Activated CD4-positive, alpha-beta memory T cell treated with anti-CD3 and anti-CD28 coated beads for 36 hours (primary cell): ENCODE measurements at regions of chr1 and their contacts with region 1.

Region 1: DNA sequence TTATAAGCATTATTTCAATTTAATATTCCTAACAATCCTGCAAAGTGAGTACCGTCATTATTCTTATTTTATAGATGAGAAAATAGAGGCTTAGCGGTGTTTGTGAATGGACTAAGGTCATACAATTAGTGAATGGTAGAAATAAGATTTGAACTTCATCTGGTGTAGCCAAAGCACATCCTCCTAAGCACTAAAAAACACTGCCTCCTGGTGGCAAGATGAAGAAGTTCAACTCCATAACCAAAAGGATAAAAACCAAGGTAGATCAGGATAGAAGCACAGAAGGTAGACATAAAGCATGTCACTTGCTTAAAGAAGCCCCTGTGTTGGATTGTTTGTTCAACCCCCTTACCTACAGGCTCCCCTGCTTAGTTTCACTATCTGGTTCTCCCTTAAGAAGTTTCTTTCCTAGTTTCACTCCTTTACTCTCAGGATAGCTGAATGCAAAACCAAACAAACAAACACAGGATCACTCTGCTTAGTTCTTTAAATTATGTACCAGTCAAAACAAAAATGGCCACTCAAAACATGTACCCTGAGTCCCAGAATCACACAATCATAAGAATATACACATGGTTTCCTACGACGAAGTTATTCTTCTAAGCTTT is 12.7 kb upstream of the AIM2 start:
- DNase-seq: no peak
- H3K4me3 Mint-ChIP-seq: peak overlapping the region; percentile 43
- H3K27ac Mint-ChIP-seq: peak overlapping the region; percentile 92
- H3K4me1 Mint-ChIP-seq: peaks cover 53% of the 10 kb centered on the region
- H3K27me3 Mint-ChIP-seq: no peaks in the 10 kb centered on the region

Region 2: DNA sequence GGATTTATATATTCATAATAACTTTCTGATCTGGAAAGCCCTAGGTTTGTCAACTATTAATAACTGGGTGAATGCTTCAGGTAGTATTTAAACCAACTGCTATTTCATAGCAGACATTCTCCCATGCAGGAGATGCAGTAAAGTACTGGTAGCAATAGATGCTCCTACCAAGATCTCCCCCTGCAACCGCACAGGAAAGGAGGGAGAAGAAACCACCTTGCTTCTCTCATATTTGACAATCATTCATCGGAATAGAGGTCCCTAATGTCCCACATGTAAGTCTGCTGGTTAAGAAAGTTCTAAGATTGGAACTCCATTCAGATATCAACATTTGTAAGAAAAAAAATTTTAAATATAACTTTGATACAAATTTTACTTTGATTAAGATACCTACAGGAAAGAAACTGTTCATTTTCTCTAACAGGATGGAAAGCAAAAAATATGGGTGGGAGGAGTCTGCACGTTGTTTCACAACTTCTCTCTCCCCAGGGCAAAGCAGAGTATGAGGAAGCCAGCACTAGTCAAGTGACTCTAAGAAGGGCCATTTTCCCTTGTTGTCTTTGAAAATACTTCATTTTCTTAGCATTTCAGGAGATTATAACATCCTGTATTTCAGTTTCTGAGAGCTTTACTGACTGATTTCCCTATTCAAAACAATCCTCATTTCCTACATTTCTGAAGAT is 158.1 kb before region 1 on chr1 and contains the start of gene PYHIN1:
- CTCF ChIA-PET with region 1: no interaction called
- POLR2A ChIA-PET with region 1: no interaction called
- intact Hi-C with region 1: loop called (anchors 1 kb)
- DNase-seq: peak; percentile 46
- H3K4me3 Mint-ChIP-seq: peak within 1 kb of the TSS; percentile 83
- H3K27ac Mint-ChIP-seq: peak within 1 kb of the TSS; percentile 84
- H3K4me1 Mint-ChIP-seq: peaks cover 50% of the 10 kb centered on the region
- H3K27me3 Mint-ChIP-seq: no peaks in the 10 kb centered on the region
- total RNA-seq, gene PYHIN1: 12.2 to 13.1 TPM

Region 3: DNA sequence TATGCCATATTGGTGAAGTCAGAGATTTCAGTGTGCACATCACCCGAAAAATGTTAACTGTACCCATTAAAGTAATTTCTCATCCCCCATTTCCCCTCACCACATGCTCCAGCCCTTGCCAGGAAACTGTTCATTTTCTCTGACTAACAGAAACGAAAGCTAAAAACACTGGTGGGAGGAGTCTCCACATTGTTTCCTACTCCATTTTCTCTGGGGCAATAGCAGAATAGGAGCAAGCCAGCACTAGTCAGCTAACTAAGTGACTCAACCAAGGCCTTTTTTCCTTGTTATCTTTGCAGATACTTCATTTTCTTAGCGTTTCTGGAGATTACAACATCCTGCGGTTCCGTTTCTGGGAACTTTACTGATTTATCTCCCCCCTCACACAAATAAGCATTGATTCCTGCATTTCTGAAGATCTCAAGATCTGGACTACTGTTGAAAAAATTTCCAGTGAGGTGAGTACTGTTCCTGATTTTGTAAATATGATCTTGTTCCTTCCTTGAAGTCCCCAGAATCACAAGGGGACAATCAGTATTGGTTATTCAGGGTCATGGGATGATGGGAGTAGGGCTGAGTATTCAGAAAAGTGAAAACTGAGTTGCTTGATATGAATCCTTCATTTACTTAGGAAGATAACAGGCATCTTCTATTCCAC is 79.5 kb before region 1 on chr1 and contains the start of gene IFI16:
- CTCF ChIA-PET with region 1: interaction called, 8 read pairs
- POLR2A ChIA-PET with region 1: interaction called, 27 read pairs
- intact Hi-C with region 1: loop called (anchors 1 kb)
- DNase-seq: peak; percentile 77
- H3K4me3 Mint-ChIP-seq: peak within 1 kb of the TSS; percentile 90
- H3K27ac Mint-ChIP-seq: peak within 1 kb of the TSS; percentile 100
- H3K4me1 Mint-ChIP-seq: peaks cover 51% of the 10 kb centered on the region
- H3K27me3 Mint-ChIP-seq: no peaks in the 10 kb centered on the region
- total RNA-seq, gene IFI16: 215 to 220 TPM

Region 4: DNA sequence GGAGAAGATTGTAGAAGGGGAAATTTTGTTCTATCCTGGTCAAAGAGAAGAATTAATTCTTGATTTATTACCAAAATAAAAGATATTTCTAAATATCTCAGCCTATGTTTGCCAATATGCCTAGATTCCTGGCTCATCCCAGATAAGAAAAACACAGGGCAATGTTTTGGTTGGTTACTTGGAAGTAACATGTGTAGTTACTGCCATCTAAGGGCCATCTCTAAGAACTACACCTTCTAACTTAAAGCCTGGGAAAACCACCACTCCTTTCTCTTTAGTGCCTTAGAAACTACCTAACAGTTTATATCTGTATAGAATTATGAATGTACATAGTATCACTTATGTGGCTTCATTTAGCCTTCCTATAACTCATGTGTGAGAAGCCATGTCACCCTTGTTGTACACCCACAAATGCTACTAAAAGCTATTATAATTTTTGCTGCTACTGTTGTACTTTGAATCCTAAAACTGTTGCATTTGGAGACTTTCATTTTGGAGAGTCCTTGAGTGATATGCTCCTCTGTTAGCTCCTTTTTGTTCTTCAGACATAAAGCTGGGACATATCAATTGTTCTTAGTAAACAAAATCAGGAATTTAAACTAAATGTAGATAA is 17.2 kb before region 1 on chr1:
- CTCF ChIA-PET with region 1: interaction called, 119 read pairs
- POLR2A ChIA-PET with region 1: interaction called, 183 read pairs
- intact Hi-C with region 1: loop called (anchors 1 kb)
- DNase-seq: no peak
- H3K4me3 Mint-ChIP-seq: peak overlapping the region; percentile 95
- H3K27ac Mint-ChIP-seq: peak overlapping the region; percentile 82
- H3K4me1 Mint-ChIP-seq: peaks cover 65% of the 10 kb centered on the region
- H3K27me3 Mint-ChIP-seq: no peaks in the 10 kb centered on the region

Region 5: DNA sequence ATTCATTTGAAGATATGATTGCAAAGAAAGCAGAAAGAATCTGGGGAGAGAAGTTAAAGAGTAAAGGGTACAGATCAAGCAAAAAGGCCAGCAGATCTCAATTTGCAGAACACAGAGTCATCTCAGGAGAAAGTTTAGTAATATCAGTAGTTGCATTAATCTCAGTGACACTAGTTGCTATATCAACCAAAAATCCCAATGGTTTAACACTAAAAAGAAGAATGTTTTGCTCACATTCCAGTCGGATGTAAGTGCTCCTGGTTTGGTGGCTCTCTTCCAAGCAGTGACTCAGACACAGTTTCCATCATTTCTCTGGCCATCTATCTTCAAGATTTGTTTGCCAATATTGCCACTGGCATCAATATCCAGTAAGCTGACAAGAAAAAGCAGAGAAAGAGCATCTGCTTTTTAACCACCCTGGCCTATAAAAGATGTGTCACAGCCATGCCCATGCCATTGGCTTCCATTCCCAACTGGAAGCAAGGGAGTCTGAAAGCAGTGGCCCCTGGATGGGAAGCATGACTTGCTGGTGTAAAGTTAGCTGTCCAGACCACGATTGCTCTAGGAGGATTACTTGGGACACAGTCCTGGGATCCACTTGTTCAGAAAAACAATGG is 32.8 kb after region 1 on chr1:
- CTCF ChIA-PET with region 1: interaction called, 7 read pairs
- POLR2A ChIA-PET with region 1: no interaction called
- intact Hi-C with region 1: loop called (anchors 1 kb)
- DNase-seq: peak; percentile 13
- H3K4me3 Mint-ChIP-seq: no peak overlapping the region
- H3K27ac Mint-ChIP-seq: no peak overlapping the region
- H3K4me1 Mint-ChIP-seq: peaks cover 18% of the 10 kb centered on the region
- H3K27me3 Mint-ChIP-seq: peaks cover 26% of the 10 kb centered on the region

Region 6: GRCh38 chr1:159152031-159152430 is 62.7 kb after region 1 on chr1:
- CTCF ChIA-PET with region 1: no interaction called
- POLR2A ChIA-PET with region 1: no interaction called
- intact Hi-C with region 1: no loop called
- DNase-seq: no peak
- H3K4me3 Mint-ChIP-seq: no peak overlapping the region
- H3K27ac Mint-ChIP-seq: no peak overlapping the region
- H3K4me1 Mint-ChIP-seq: no peaks in the 10 kb centered on the region
- H3K27me3 Mint-ChIP-seq: peaks cover 44% of the 10 kb centered on the region

Region 7: DNA sequence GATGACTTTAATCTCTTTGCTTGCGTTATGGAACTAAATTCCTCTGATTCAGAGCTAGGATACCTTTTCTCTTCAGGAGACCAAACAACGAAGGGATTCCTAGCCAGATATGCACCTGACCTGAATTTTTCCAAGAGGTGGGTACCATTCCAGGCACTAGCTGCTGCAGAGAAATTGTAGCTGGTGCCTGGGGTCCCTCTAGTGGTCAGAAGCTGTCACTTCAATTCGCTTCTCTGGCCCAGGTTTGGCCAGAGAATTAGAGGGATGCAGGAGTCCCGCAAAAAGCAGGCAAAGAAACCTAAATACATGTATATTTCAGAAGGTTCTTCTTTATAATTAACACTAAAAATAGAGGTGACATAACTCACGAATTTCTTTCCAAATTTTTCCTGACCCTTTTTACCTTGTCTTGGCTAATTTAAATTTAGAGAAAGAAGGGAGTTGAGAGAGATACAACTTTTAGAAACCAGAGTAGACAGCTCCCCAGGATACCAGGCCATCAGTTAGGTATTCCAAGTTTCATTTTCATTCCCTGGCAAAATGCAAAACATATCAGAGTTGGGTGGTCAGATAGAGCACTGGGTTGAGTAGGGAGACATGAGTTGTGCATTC is 125.0 kb after region 1 on chr1:
- CTCF ChIA-PET with region 1: no interaction called
- POLR2A ChIA-PET with region 1: no interaction called
- intact Hi-C with region 1: no loop called
- DNase-seq: peak; percentile 54
- H3K4me3 Mint-ChIP-seq: no peak overlapping the region
- H3K27ac Mint-ChIP-seq: no peak overlapping the region
- H3K4me1 Mint-ChIP-seq: no peaks in the 10 kb centered on the region
- H3K27me3 Mint-ChIP-seq: peaks cover 29% of the 10 kb centered on the region